Activated T-helper 1 cell treated with anti-CD3 and anti-CD28 coated beads, Interleukin-12 subunit alpha, Interleukin-12 subunit beta, Interleukin-2, Interleukin-4 antibody, amounts not matched to agents 30 ng/mL and 10 ng/mL and 1 ng/mL, durations not matched to agents 14 hours and 24 hours and 36 hours (primary cell): ENCODE measurements at regions of chr14 and their contacts with region 1.

Region 1: DNA sequence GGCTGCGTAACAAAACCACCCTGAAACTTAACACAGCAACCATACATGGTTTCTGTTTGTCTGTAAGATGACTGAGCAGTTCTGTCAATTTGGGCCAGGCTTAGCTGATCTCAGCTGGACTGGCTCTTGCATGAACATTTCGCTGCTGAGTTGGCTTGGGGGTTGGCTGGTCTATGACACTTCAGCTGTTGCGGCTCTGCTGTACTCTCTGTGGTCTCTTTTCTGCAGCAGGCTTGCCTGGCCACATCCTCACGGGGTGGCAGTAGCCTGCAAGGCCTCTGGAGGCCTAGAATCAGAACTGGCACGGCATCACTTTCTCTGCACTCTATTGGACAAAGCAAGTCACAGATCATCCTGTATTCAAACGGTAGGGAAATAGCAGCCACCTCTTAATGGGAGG is 216.2 kb downstream of the BCL11B start:
- DNase-seq: peak; percentile 21
- H3K4me3 Mint-ChIP-seq: no peak overlapping the region
- H3K27ac Mint-ChIP-seq: no peak overlapping the region
- H3K4me1 Mint-ChIP-seq: no peaks in the 10 kb centered on the region
- H3K27me3 Mint-ChIP-seq: no peaks in the 10 kb centered on the region

Region 2: DNA sequence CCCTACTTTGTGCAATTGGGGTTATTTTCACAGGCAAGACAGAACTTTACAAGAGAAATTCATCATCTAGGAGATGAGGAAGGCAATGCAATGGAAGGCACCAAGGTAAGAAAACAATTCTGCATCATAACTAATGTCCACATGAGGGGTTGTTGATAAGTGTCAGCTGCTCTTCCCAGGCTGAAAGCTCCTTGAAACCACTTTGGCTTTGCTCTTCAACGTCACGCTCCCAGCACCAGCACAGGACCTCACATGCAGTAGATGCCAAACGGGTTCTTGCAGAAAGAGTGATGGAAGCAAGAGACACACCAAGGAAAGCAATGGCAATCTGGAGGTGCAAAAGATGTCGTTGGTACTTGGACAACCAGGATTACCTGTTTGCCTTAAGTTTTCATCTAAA is 269.4 kb before region 1 on chr14:
- intact Hi-C with region 1: no loop called
- DNase-seq: no peak
- H3K4me3 Mint-ChIP-seq: no peak overlapping the region
- H3K27ac Mint-ChIP-seq: no peak overlapping the region
- H3K4me1 Mint-ChIP-seq: no peaks in the 10 kb centered on the region
- H3K27me3 Mint-ChIP-seq: peaks cover 6% of the 10 kb centered on the region

Region 3: GRCh38 chr14:98931911-98932310 is 123.9 kb before region 1 on chr14:
- intact Hi-C with region 1: loop called (anchors 10 kb)
- DNase-seq: peak; percentile 61
- H3K4me3 Mint-ChIP-seq: peak overlapping the region; percentile 55
- H3K27ac Mint-ChIP-seq: peak overlapping the region; percentile 81
- H3K4me1 Mint-ChIP-seq: peaks cover 54% of the 10 kb centered on the region
- H3K27me3 Mint-ChIP-seq: no peaks in the 10 kb centered on the region